Natural killer cell (primary cell): ENCODE measurements at regions of chr14 and their contacts with region 1.

Region 1: GRCh38 chr14:75307700-75308379 is 29.2 kb downstream of the FOS start:
- DNase-seq: peak; percentile 55 to 87
- ATAC-seq: peak; percentile 62 to 66 (median 64)
- H3K4me3 ChIP-seq: no peak overlapping the region
- H3K4me3 Mint-ChIP-seq: no peak overlapping the region
- H3K27ac ChIP-seq: no peak overlapping the region
- H3K27ac Mint-ChIP-seq: no peak overlapping the region
- H3K4me1 ChIP-seq: peaks cover 6% of the 10 kb centered on the region
- H3K4me1 Mint-ChIP-seq: peaks cover 4 to 10% of the 10 kb centered on the region in 2 donors
- H3K27me3 ChIP-seq: no peaks in the 10 kb centered on the region
- H3K27me3 Mint-ChIP-seq: peaks cover 0 to 3% of the 10 kb centered on the region in 2 donors
- CTCF ChIP-seq: peak; percentile 83

Region 2: DNA sequence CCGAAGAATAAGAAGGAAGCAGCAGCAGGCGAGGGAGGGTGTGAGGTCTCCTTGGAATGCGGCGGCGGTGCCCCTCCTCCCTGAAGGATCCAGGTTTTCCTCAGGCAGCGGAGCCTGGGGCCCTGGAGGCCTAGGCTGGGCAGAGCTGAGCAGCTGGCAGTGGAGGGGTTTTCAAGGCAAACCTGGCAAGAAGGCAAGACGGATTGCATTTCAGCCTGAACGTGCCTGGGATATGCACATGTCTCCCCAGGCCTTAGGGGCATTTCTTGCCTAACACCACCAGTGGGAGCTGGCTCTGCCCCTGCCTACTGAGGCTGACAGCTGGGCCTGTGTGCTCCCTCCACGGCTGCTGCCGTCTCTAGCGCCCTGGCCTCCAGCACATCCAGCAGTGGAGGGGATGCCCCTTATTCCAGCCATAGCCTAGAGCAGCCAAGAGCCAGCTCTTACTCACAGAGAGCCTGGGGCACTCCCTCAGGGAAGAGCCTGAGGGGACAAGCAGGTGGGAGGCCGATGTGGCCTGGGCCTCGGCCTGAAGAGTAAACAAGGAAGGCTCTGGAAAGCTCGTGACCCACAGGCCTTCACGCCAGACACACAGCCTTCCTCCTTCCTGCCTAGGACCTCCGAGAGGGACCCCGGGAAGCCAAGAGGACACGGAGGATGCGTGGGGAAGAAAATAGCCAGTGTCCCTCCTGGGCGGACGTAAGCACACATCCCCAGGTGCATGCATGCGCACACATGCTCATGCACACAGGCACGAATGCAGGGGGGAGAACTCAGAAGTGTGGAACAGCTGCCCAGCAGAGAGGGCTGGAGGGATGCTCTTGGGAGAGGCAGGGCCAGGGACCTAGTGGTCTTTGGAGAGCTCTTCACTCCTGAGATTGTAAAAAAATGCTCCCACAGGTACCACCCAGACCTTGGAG is 328.1 kb before region 1 on chr14:
- intact Hi-C with region 1: no loop called
- DNase-seq: no peak
- ATAC-seq: no peak
- H3K4me3 ChIP-seq: no peak overlapping the region
- H3K4me3 Mint-ChIP-seq: no peak overlapping the region
- H3K27ac ChIP-seq: no peak overlapping the region
- H3K27ac Mint-ChIP-seq: no peak overlapping the region
- H3K4me1 ChIP-seq: no peaks in the 10 kb centered on the region
- H3K4me1 Mint-ChIP-seq: no peaks in the 10 kb centered on the region
- H3K27me3 ChIP-seq: no peaks in the 10 kb centered on the region
- H3K27me3 Mint-ChIP-seq: no peaks in the 10 kb centered on the region
- CTCF ChIP-seq: no peak

Region 3: DNA sequence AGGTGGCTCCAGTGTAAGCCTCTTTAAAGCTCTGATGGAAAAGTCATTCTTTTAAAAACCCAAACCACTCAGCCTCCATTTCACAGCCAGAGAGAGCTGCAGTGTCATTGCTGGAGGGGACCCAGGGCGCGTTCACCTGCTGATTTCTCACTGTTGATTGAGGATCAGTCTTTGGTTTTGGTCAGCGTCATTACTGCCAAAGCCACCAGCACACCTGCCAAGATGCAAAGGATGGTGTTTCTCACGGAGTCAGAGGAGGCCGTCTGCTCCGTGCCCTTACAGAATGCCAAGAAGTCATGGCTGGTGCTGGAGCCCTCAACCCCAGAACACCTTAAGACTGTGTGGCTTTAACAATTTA is 181.6 kb after region 1 on chr14:
- intact Hi-C with region 1: loop called (anchors 1 kb)
- DNase-seq: no peak
- ATAC-seq: no peak
- H3K4me3 ChIP-seq: no peak overlapping the region
- H3K4me3 Mint-ChIP-seq: no peak overlapping the region
- H3K27ac ChIP-seq: no peak overlapping the region
- H3K27ac Mint-ChIP-seq: no peak overlapping the region
- H3K4me1 ChIP-seq: peaks cover 5% of the 10 kb centered on the region
- H3K4me1 Mint-ChIP-seq: peaks cover 5 to 10% of the 10 kb centered on the region in 2 donors
- H3K27me3 ChIP-seq: no peaks in the 10 kb centered on the region
- H3K27me3 Mint-ChIP-seq: peaks cover 0 to 6% of the 10 kb centered on the region in 2 donors
- CTCF ChIP-seq: no peak

Region 4: DNA sequence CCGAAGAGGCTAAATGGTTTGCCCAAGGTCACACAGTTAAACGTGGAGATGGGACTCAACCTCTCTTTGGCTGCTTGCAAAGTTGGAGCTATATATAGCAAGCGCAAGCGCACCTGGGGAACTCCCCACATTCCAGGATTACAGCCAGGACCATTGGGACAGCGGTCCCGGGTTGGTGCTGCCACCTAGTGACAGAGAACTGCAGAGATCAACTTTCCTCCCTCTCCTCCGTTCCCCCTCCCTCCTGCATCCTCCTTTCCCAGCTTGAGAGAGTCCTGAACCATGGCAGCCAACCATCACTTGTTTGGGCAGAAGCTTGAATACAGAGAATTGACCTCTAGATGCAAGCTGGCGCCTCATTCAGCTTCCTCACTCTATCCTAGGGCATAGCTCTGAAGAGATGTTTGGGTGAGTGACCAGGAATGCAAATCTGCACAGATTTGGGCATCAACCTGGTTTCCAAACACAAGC is 253.2 kb after region 1 on chr14:
- intact Hi-C with region 1: loop called (anchors 5 kb)
- DNase-seq: peak; percentile 26 to 76
- ATAC-seq: peak in 2 of 3 donors; percentile 64 to 77
- H3K4me3 ChIP-seq: no peak overlapping the region
- H3K4me3 Mint-ChIP-seq: no peak overlapping the region
- H3K27ac ChIP-seq: no peak overlapping the region
- H3K27ac Mint-ChIP-seq: no peak overlapping the region
- H3K4me1 ChIP-seq: peaks cover 5% of the 10 kb centered on the region
- H3K4me1 Mint-ChIP-seq: peaks cover under 1 to 7% of the 10 kb centered on the region in 2 donors
- H3K27me3 ChIP-seq: no peaks in the 10 kb centered on the region
- H3K27me3 Mint-ChIP-seq: no peaks in the 10 kb centered on the region
- CTCF ChIP-seq: peak; percentile 81